AG04450 (cell line): ENCODE measurements at regions of chr3 and their contacts with region 1.

Region 1: DNA sequence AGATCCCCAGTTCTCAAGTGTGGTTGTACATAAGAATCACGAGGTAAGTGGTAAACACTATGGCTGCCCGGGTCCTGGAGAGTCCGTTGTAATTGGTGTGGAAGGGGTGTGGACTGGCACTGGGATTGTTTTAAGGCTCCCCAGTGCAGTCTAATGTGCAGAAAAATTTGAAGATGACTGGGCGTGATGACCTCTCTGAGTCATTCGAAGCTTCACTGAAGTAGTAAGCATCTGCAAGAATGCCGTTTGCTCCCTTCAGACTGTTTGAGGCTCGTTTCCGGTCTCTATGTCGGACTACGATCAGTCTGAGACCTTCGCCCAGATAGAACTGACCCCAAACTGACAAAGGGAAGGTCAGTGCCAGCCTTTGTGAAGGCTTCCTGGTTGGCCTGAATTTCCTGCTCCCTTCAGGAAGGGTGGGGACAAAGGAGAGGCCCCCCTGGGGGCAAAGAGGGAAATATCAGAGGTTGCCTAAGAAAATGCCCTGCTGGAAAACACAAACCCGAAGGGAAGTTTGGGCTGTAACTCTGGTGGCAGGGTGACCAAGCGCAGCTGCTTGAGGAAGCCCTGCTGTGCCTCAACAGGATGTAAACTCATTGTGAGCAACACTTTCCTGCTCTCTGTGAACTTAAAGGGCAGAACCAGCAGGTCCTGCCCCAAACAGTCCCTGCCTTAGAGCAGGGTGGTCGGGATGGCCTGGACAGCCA is 34.6 kb downstream of the BTD start:
- DNase-seq: peak; percentile 74
- H3K4me3 ChIP-seq: peak overlapping the region; percentile 18; the same call in 1 of the 2 replicates
- H3K27ac ChIP-seq: peak overlapping the region; percentile 98
- H3K27me3 ChIP-seq: no peaks in the 10 kb centered on the region
- CTCF ChIP-seq: no peak

Region 2: GRCh38 chr3:15428539-15428938 is 207.6 kb before region 1 on chr3:
- CTCF ChIA-PET with region 1: no interaction called
- POLR2A ChIA-PET with region 1: no interaction called
- DNase-seq: no peak
- H3K4me3 ChIP-seq: peak overlapping the region; percentile 95
- H3K27ac ChIP-seq: no peak overlapping the region
- H3K27me3 ChIP-seq: no peaks in the 10 kb centered on the region
- CTCF ChIP-seq: no peak

Region 3: DNA sequence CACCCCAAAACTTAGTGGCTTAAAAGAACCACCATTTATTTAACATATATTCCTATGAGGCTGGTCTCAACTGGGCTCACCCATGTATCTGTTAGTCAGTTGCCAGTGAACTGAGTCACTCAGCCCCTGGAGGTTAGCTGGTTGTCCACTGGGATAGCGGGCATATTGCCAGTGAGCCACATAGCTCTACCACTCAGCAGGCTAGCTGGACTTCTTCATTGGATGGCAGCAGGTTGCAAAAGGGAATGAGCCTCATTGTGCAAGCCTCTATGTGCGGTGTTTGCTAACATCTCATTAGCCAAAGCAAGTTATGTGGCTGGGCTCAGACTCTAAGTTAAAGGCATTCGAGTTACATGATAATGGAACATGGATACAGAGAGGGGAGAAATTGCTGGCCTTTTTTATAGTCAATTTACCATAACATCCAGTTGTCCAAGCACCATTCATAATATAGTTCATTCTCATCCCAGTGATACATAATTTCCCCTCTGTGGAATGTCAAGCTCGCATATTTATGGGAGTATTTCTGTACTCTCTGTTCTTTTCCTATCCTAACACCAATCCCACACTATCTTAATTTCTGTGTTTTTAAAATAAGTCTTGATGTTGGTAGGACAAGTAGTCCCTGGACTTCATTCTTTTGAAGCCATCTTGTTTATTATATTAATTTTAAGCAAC is 25.9 kb before region 1 on chr3:
- CTCF ChIA-PET with region 1: no interaction called
- POLR2A ChIA-PET with region 1: no interaction called
- DNase-seq: no peak
- H3K4me3 ChIP-seq: no peak overlapping the region
- H3K27ac ChIP-seq: no peak overlapping the region
- H3K27me3 ChIP-seq: no peaks in the 10 kb centered on the region
- CTCF ChIP-seq: no peak

Region 4: GRCh38 chr3:15647611-15648167 is 11.5 kb after region 1 on chr3:
- CTCF ChIA-PET with region 1: interaction called, 4 read pairs
- POLR2A ChIA-PET with region 1: interaction called, 20 read pairs
- DNase-seq: peak; percentile 90
- H3K4me3 ChIP-seq: peak overlapping the region; percentile 8; the same call in 1 of the 2 replicates
- H3K27ac ChIP-seq: peak overlapping the region; percentile 97
- H3K27me3 ChIP-seq: no peaks in the 10 kb centered on the region
- CTCF ChIP-seq: no peak

Region 5: GRCh38 chr3:15708882-15709677 is 72.9 kb after region 1 on chr3:
- CTCF ChIA-PET with region 1: no interaction called
- POLR2A ChIA-PET with region 1: no interaction called
- DNase-seq: no peak
- H3K4me3 ChIP-seq: no peak overlapping the region
- H3K27ac ChIP-seq: no peak overlapping the region
- H3K27me3 ChIP-seq: no peaks in the 10 kb centered on the region
- CTCF ChIP-seq: no peak